Spleen (tissue), 13 donors: ENCODE measurements at regions of chr1 and their contacts with region 1.

Region 1: DNA sequence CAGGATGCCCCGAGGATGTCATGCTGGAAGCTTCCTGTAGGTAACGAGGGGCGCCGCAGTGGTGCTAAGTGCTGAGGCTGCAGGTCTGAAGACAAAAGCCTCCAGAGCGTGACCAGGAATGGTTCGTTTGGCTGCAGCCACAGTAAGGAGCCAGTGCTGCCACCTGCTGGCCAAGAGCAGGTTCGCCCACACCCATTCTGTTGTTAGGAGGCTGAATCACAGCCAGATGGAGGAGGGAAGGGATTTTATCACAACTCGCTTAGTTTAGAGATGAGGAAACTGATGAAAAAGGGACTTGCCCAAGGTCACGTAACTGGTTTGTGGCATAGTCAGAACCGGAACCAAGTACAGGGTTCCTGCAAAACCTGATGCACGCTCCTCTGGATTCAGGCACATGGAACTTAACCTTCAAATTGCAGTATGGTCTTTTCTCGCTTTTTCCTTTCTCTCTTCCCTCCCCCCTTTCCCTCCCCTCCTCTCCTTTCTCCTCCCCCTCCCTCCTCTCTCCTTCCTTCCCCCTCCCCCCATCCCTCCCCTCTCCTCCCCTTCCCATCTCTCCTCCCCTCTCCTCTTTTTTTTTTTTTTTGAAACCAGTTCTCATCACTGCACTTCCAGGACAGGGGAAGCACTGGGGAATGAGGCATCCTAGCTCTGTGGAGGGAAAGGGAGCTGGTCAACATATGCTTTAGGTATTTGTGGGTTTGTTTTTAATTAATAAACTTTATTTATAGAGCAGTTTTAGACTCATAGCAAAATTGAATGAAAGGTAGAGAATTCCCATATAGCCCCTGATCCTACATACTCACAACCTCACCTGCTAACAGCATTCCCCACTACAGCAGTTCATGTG is 81.8 kb downstream of the MPZL1 start:
- DNase-seq: peak; percentile 97
- H3K4me3 ChIP-seq: no peak overlapping the region
- H3K27ac ChIP-seq: peak overlapping the region in 2 of 8 donors; percentile 45 to 81
- H3K4me1 ChIP-seq: peaks cover 2 to 27% (median 23%) of the 10 kb centered on the region in 6 donors
- H3K27me3 ChIP-seq: no peaks in the 10 kb centered on the region
- CTCF ChIP-seq: peak; percentile 89 to 98 (median 96)
- POLR2A ChIP-seq: no peak

Region 2: DNA sequence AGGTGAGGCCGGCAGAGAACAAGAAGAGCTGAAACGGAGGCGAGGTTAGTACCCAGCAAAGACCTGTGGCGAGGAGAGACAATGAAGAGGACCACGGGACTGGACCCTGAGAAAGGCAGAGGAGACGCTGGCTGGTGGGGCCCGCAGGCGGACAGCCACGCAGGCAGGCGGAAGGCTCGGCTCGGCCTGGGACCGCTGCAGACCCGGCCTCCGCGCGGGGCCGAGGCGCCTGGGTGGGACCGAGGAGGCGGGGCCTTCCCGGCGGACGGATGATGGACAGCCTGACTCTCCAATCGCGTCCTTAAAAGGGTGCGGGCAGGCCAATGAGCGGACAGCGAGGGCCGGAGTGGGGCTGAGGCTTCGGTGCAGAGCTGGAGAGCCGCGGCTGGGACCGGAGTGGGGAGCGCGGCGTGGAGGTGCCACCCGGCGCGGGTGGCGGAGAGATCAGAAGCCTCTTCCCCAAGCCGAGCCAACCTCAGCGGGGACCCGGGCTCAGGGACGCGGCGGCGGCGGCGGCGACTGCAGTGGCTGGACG is 81.9 kb before region 1 on chr1 and contains the start of gene MPZL1:
- intact Hi-C with region 1: loop called (anchors 5 kb)
- DNase-seq: peak; percentile 97
- H3K4me3 ChIP-seq: peak within 1 kb of the TSS; percentile 75 to 98 (median 88)
- H3K27ac ChIP-seq: peak within 1 kb of the TSS; percentile 50 to 90 (median 86)
- H3K4me1 ChIP-seq: peaks cover 10 to 76% (median 53%) of the 10 kb centered on the region in 6 donors
- H3K27me3 ChIP-seq: no peaks in the 10 kb centered on the region
- CTCF ChIP-seq: no peak
- POLR2A ChIP-seq: peak in 1 of 3 donors; percentile 16
- total RNA-seq, gene MPZL1: 43.0 to 65.8 (median 59.8) TPM

Region 3: GRCh38 chr1:167862432-167863076 is 59.0 kb after region 1 on chr1:
- intact Hi-C with region 1: no loop called
- DNase-seq: no peak
- H3K4me3 ChIP-seq: no peak overlapping the region
- H3K27ac ChIP-seq: no peak overlapping the region
- H3K4me1 ChIP-seq: no peaks in the 10 kb centered on the region
- H3K27me3 ChIP-seq: no peaks in the 10 kb centered on the region
- CTCF ChIP-seq: no peak
- POLR2A ChIP-seq: no peak